Transverse colon (tissue), 4 donors: ENCODE measurements at regions of chr2 and their contacts with region 1.

Region 1: GRCh38 chr2:64914735-64915509 is 74.3 kb upstream of the SLC1A4 start:
- DNase-seq: no peak
- H3K4me3 ChIP-seq: no peak overlapping the region
- H3K27ac ChIP-seq: peak overlapping the region in 2 of 4 donors; percentile 47 to 66
- H3K4me1 ChIP-seq: peaks cover 4 to 9% (median 9%) of the 10 kb centered on the region in 4 donors
- H3K27me3 ChIP-seq: no peaks in the 10 kb centered on the region
- CTCF ChIP-seq: no peak
- EP300 ChIP-seq: no peak
- POLR2A ChIP-seq: no peak

Region 2: GRCh38 chr2:65035346-65035943 is 120.5 kb after region 1 on chr2:
- in situ Hi-C with region 1: loop called (anchors 5 to 10 kb)
- intact Hi-C with region 1: loop called (anchors 2 kb)
- DNase-seq: no peak
- H3K4me3 ChIP-seq: no peak overlapping the region
- H3K27ac ChIP-seq: no peak overlapping the region
- H3K4me1 ChIP-seq: peaks cover 7 to 40% (median 10%) of the 10 kb centered on the region in 4 donors
- H3K27me3 ChIP-seq: no peaks in the 10 kb centered on the region
- CTCF ChIP-seq: no peak
- EP300 ChIP-seq: no peak
- POLR2A ChIP-seq: no peak

Region 3: GRCh38 chr2:65040400-65041261 is 125.7 kb after region 1 on chr2:
- in situ Hi-C with region 1: loop called (anchors 5 to 10 kb)
- intact Hi-C with region 1: loop called (anchors 2 kb)
- DNase-seq: peak; percentile 90
- H3K4me3 ChIP-seq: no peak overlapping the region
- H3K27ac ChIP-seq: no peak overlapping the region
- H3K4me1 ChIP-seq: peaks cover 0 to 14% (median 2%) of the 10 kb centered on the region in 4 donors
- H3K27me3 ChIP-seq: no peaks in the 10 kb centered on the region
- CTCF ChIP-seq: peak; percentile 95 to 98 (median 98)
- EP300 ChIP-seq: no peak
- POLR2A ChIP-seq: no peak

Region 4: DNA sequence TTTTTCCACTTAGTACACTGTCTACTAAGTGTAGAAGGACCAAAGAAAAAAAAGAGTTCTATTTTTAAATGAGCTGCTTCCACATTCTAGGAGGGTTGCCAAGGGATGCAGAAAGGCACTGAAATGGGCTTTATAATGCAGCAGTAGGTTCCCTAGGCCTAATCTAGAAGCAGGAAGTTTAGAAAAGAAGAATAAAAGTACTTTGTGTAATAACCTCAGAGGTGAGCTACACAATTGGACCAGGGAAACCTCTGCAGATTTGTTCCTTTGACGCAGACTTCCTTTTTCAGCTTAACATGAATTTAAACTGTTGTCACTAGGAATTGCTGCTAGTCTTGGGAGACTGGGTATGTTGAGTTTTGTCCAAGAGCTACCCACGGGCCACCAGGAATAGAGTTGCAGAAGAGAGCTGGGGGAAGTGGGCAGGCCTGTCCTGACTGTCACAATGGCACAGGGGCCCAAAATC is 249.5 kb after region 1 on chr2:
- in situ Hi-C with region 1: loop called in 1 of 4 experiments (anchors 25 kb)
- intact Hi-C with region 1: no loop called
- DNase-seq: no peak
- H3K4me3 ChIP-seq: no peak overlapping the region
- H3K27ac ChIP-seq: peak overlapping the region; percentile 18 to 56 (median 28)
- H3K4me1 ChIP-seq: peaks cover 3 to 48% (median 20%) of the 10 kb centered on the region in 4 donors
- H3K27me3 ChIP-seq: no peaks in the 10 kb centered on the region
- CTCF ChIP-seq: no peak
- EP300 ChIP-seq: no peak
- POLR2A ChIP-seq: no peak

Region 5: DNA sequence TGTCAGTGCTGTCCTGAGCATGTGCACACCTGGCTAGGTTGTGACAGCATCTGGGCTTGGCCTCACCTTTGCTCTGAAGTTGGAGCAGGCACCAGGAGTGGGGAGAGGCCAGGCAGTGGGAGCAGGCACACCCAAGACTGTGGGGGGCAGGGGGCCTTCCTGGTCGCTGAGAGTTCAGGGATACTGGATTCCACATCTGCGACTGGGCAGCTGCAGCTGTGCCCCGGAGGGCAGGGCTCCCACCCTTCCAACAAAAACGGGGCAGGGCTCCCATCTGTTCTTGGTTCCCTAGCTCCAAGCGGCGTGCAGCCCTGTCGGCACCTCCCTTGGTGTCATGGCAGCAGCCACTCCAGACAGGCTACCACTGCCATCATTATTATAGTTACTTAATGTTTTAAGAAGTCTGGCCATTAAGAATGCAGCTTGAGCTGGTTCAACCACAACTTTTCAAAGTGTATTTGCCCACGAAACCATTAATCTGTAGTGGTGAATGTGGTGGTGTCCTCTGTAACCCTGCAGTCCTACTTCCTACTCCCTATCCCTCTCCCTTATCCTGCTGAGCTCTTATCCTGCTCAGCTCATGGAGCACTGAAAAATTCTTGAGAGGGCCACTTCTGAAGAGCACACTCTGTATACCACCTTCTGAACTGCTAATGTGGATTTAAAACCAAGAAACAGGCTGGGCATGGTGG is 263.0 kb after region 1 on chr2:
- in situ Hi-C with region 1: loop called (anchors 10 to 25 kb)
- intact Hi-C with region 1: no loop called
- DNase-seq: peak; percentile 74
- H3K4me3 ChIP-seq: no peak overlapping the region
- H3K27ac ChIP-seq: peak overlapping the region; percentile 41 to 71 (median 68)
- H3K4me1 ChIP-seq: peaks cover 0 to 10% (median 9%) of the 10 kb centered on the region in 4 donors
- H3K27me3 ChIP-seq: no peaks in the 10 kb centered on the region
- CTCF ChIP-seq: no peak
- EP300 ChIP-seq: no peak
- POLR2A ChIP-seq: peak; percentile 27

Region 6: GRCh38 chr2:65186872-65187851 is 272.2 kb after region 1 on chr2:
- in situ Hi-C with region 1: loop called in 2 of 4 experiments (anchors 25 kb)
- intact Hi-C with region 1: loop called (anchors 5 kb)
- DNase-seq: peak; percentile 89
- H3K4me3 ChIP-seq: peak overlapping the region in 1 of 4 donors; percentile 13
- H3K27ac ChIP-seq: peak overlapping the region; percentile 68 to 83 (median 76)
- H3K4me1 ChIP-seq: peaks cover 5 to 25% (median 13%) of the 10 kb centered on the region in 4 donors
- H3K27me3 ChIP-seq: no peaks in the 10 kb centered on the region
- CTCF ChIP-seq: peak; percentile 74 to 88 (median 84)
- EP300 ChIP-seq: no peak
- POLR2A ChIP-seq: no peak

Region 7: GRCh38 chr2:65554765-65555591 is 640.1 kb after region 1 on chr2:
- in situ Hi-C with region 1: loop called in 2 of 4 experiments (anchors 25 kb)
- intact Hi-C with region 1: no loop called
- DNase-seq: no peak
- H3K4me3 ChIP-seq: no peak overlapping the region
- H3K27ac ChIP-seq: no peak overlapping the region
- H3K4me1 ChIP-seq: peaks cover 0 to 5% (median 4%) of the 10 kb centered on the region in 4 donors
- H3K27me3 ChIP-seq: no peaks in the 10 kb centered on the region
- CTCF ChIP-seq: no peak
- EP300 ChIP-seq: no peak
- POLR2A ChIP-seq: no peak

Region 8: GRCh38 chr2:66509326-66509811 is 1594.4 kb after region 1 on chr2:
- in situ Hi-C with region 1: no loop called
- intact Hi-C with region 1: no loop called
- DNase-seq: no peak
- H3K4me3 ChIP-seq: no peak overlapping the region
- H3K27ac ChIP-seq: peak overlapping the region; percentile 33 to 69 (median 56)
- H3K4me1 ChIP-seq: peaks cover 3 to 34% (median 21%) of the 10 kb centered on the region in 4 donors
- H3K27me3 ChIP-seq: no peaks in the 10 kb centered on the region
- CTCF ChIP-seq: no peak
- EP300 ChIP-seq: no peak
- POLR2A ChIP-seq: no peak